Caco-2 (cell line): ENCODE measurements at regions of chr20 and their contacts with region 1.

Region 1: DNA sequence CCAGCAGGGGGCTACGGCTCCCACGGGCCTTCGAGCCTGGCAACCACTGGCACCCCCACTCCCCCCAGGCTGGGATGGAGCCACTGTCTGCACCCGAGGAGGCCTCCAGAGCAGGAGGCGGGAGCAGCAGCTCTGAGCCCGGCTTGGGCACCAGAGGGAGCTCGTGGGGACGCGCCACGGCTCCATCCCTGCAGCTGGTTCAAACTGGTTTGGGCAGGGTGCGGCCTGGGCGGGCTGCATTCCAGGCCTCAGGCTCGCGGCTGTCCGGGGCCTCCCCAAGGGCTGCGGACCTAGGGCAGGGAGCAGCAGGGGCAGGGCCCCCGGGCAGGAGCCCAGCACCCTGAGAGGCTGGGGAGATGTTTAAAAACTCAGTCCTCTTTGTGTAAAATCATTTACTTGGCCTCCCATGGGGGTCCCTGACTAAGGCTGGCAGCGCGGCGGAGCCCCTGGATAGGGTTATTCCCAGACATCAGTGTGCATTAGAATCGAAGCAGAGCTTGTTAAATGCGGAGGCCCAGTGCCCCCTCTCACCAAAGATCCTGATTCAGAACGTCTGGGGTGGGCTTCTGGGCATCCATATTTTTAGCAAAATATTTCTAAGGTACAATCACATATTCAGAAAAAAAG is 4.1 kb upstream of the BCAS4 start:
- DNase-seq: peak; percentile 100
- H3K4me3 ChIP-seq: no peak overlapping the region
- H3K4me3 Mint-ChIP-seq: peak overlapping the region; percentile 74
- H3K27ac Mint-ChIP-seq: peak overlapping the region; percentile 99
- H3K4me1 ChIP-seq: peaks cover 47% of the 10 kb centered on the region
- H3K4me1 Mint-ChIP-seq: peaks cover 62% of the 10 kb centered on the region
- H3K27me3 ChIP-seq: no peaks in the 10 kb centered on the region
- H3K27me3 Mint-ChIP-seq: no peaks in the 10 kb centered on the region
- CTCF ChIP-seq: peak; percentile 97 to 100

Region 2: GRCh38 chr20:50189681-50190582 is 600.8 kb before region 1 on chr20:
- CTCF ChIA-PET with region 1: interaction called, 3 read pairs
- POLR2A ChIA-PET with region 1: interaction called, 3 read pairs
- intact Hi-C with region 1: loop called (anchors 2 kb)
- DNase-seq: peak; percentile 96 to 100
- H3K4me3 ChIP-seq: peak overlapping the region; percentile 96
- H3K4me3 Mint-ChIP-seq: peak overlapping the region; percentile 94
- H3K27ac Mint-ChIP-seq: peak overlapping the region; percentile 99
- H3K4me1 ChIP-seq: peaks cover 49% of the 10 kb centered on the region
- H3K4me1 Mint-ChIP-seq: peaks cover 54% of the 10 kb centered on the region
- H3K27me3 ChIP-seq: no peaks in the 10 kb centered on the region
- H3K27me3 Mint-ChIP-seq: no peaks in the 10 kb centered on the region
- CTCF ChIP-seq: peak; percentile 99

Region 3: DNA sequence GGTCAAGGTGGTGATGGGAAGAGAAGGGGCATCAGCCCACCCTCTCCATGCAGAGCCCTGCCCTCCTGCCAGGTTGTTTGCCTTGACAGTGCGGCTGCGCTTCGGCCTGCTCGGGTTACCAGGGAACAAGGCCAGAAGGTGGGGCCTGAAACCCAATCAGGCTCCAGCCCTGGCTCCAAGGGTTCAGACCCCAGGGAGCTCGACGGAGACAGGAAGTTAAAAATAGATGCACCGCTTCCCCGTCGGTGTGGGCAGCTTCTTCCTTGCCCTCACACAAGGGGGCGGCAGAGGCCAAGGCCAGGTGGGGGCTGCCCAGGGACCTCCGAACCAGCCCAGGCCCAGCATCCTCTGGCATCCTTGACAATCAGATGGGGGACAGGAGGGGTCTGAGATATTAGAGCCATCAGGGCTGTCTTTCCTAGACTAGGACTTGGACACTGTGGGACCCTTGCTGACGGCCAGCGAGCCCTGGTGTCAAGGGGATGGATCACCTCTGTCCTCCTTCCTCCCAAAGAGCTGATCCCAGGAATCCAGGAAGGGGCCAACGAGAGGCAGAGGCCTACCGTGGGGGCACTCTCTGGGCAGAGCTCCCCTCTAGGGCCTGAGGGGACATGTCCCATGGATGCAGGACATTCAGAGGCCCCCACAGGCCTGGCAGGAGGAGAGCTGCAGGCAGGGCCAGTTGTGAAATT is 164.6 kb before region 1 on chr20:
- CTCF ChIA-PET with region 1: interaction called, 119 read pairs
- POLR2A ChIA-PET with region 1: no interaction called
- intact Hi-C with region 1: loop called (anchors 1 kb)
- DNase-seq: peak; percentile 85 to 91
- H3K4me3 ChIP-seq: no peak overlapping the region
- H3K4me3 Mint-ChIP-seq: no peak overlapping the region
- H3K27ac Mint-ChIP-seq: peak overlapping the region; percentile 23
- H3K4me1 ChIP-seq: peaks cover 41% of the 10 kb centered on the region
- H3K4me1 Mint-ChIP-seq: peaks cover 12% of the 10 kb centered on the region
- H3K27me3 ChIP-seq: no peaks in the 10 kb centered on the region
- H3K27me3 Mint-ChIP-seq: no peaks in the 10 kb centered on the region
- CTCF ChIP-seq: peak; percentile 96 to 97

Region 4: DNA sequence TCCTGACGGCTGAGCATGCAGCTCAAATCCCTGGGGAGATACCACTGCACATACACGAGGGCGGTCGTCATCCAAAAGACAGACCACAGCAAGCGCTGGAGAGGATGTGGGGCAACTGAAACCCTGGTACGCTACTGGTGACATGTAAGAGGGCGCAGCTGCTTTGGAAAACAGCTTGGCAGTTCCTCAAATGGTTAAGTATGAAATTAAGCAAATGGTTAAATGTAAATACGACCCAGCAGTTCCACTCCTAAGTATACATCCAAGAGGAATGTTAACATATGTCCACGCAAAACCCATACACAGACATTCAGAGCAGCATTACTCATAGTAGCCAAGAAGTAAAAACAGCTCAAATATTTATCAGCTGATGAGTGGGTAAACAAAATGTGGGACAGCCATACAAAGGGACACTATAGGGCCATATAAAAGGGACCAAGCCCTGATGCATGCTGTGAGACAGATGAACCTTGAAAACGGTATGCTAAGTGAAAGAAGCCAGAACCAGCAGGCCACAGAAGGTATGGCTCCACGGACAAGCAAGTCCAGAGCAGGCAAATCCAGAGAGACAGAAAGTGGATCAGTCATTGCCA is 138.0 kb before region 1 on chr20:
- CTCF ChIA-PET with region 1: no interaction called
- POLR2A ChIA-PET with region 1: no interaction called
- intact Hi-C with region 1: no loop called
- DNase-seq: no peak
- H3K4me3 ChIP-seq: no peak overlapping the region
- H3K4me3 Mint-ChIP-seq: no peak overlapping the region
- H3K27ac Mint-ChIP-seq: no peak overlapping the region
- H3K4me1 ChIP-seq: peaks cover 11% of the 10 kb centered on the region
- H3K4me1 Mint-ChIP-seq: peaks cover 17% of the 10 kb centered on the region
- H3K27me3 ChIP-seq: no peaks in the 10 kb centered on the region
- H3K27me3 Mint-ChIP-seq: no peaks in the 10 kb centered on the region
- CTCF ChIP-seq: no peak

Region 5: GRCh38 chr20:50713657-50714101 is 77.1 kb before region 1 on chr20:
- CTCF ChIA-PET with region 1: interaction called, 15 read pairs
- POLR2A ChIA-PET with region 1: interaction called, 5 read pairs
- intact Hi-C with region 1: loop called (anchors 1 kb)
- DNase-seq: peak; percentile 76 to 80
- H3K4me3 ChIP-seq: no peak overlapping the region
- H3K4me3 Mint-ChIP-seq: peak overlapping the region; percentile 4
- H3K27ac Mint-ChIP-seq: peak overlapping the region; percentile 60
- H3K4me1 ChIP-seq: peaks cover 68% of the 10 kb centered on the region
- H3K4me1 Mint-ChIP-seq: peaks cover 60% of the 10 kb centered on the region
- H3K27me3 ChIP-seq: no peaks in the 10 kb centered on the region
- H3K27me3 Mint-ChIP-seq: no peaks in the 10 kb centered on the region
- CTCF ChIP-seq: peak; percentile 62 to 63

Region 6: GRCh38 chr20:50750145-50750671 is 40.6 kb before region 1 on chr20:
- CTCF ChIA-PET with region 1: interaction called, 40 read pairs
- POLR2A ChIA-PET with region 1: interaction called, 3 read pairs
- intact Hi-C with region 1: no loop called
- DNase-seq: peak in 1 of 2 experiments; percentile 21
- H3K4me3 ChIP-seq: no peak overlapping the region
- H3K4me3 Mint-ChIP-seq: no peak overlapping the region
- H3K27ac Mint-ChIP-seq: peak overlapping the region; percentile 57
- H3K4me1 ChIP-seq: peaks cover 60% of the 10 kb centered on the region
- H3K4me1 Mint-ChIP-seq: peaks cover 59% of the 10 kb centered on the region
- H3K27me3 ChIP-seq: no peaks in the 10 kb centered on the region
- H3K27me3 Mint-ChIP-seq: no peaks in the 10 kb centered on the region
- CTCF ChIP-seq: no peak

Region 7: DNA sequence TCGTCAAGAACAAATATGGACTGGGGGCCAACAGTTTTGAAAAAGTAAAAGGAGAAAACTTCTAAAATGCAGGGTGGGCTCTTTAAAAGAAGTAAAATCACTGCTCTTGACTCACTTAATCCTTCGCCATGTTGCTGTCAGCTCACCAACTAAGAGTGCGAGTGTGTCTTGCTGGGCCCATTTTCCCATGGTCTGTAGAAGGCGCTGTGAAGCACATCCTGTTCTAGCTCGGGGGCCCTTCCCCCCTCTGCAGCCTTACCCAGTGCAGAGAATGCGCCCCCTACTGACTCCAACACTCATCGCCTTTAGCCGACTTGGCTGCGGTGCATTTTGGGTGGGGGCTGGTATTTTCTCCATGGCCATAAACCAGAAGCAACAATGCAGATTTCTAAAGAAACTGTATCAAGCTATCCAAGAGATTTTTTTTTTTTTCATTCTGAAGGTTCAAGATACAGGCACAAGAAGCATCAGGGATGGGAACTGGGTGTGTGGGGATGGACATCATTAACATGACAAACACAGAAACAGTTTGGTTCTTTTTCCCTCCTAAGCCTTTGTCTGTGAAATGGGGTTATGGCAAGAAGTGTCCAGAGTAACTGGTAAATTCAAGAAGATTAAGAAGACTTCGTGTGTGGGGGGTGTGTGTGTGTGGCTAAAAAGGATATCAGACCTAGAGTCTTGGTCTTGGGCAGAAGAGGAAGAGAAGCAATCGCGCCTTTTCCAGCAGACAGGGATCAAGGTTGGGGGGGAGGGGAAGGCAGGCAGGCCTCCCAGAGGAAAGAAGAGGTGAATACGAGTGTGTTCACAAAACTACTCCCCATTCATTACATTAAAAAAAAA is 138.8 kb after region 1 on chr20:
- CTCF ChIA-PET with region 1: interaction called, 116 read pairs
- POLR2A ChIA-PET with region 1: interaction called, 15 read pairs
- intact Hi-C with region 1: loop called (anchors 1 kb)
- DNase-seq: peak; percentile 96 to 98
- H3K4me3 ChIP-seq: peak overlapping the region; percentile 96
- H3K4me3 Mint-ChIP-seq: peak overlapping the region; percentile 90
- H3K27ac Mint-ChIP-seq: peak overlapping the region; percentile 89
- H3K4me1 ChIP-seq: peaks cover 50% of the 10 kb centered on the region
- H3K4me1 Mint-ChIP-seq: peaks cover 56% of the 10 kb centered on the region
- H3K27me3 ChIP-seq: no peaks in the 10 kb centered on the region
- H3K27me3 Mint-ChIP-seq: no peaks in the 10 kb centered on the region
- CTCF ChIP-seq: peak; percentile 99

Region 8: DNA sequence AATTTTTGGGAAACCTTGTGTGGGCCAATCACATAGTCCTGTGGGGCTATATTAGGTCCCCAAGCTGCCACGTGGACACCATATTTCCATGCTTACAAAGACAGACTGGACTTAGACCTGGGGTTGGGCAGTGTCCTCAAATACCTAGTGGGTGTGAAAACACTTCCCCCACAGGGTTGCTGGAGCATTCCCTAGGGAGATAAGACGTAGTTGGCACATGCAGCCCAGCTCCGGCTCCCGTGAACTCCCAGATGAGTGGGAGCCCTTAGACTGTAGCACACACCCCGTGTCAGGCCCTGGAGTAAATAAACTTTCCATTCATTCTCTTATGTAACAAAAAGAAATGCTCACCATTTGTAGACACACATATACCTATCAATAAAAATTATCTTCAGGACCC is 218.0 kb after region 1 on chr20:
- CTCF ChIA-PET with region 1: no interaction called
- POLR2A ChIA-PET with region 1: no interaction called
- intact Hi-C with region 1: no loop called
- DNase-seq: no peak
- H3K4me3 ChIP-seq: no peak overlapping the region
- H3K4me3 Mint-ChIP-seq: no peak overlapping the region
- H3K27ac Mint-ChIP-seq: no peak overlapping the region
- H3K4me1 ChIP-seq: no peaks in the 10 kb centered on the region
- H3K4me1 Mint-ChIP-seq: no peaks in the 10 kb centered on the region
- H3K27me3 ChIP-seq: no peaks in the 10 kb centered on the region; the same call in none of the 2 replicates
- H3K27me3 Mint-ChIP-seq: peaks cover 8% of the 10 kb centered on the region
- CTCF ChIP-seq: no peak